T-cell (primary cell): ENCODE measurements at regions of chr1 and their contacts with region 1.

Region 1: GRCh38 chr1:88973520-88974137 is 18.8 kb downstream of the KYAT3 start:
- DNase-seq: peak in 1 of 35 experiments; percentile 63
- ATAC-seq: peak in 1 of 4 experiments; percentile 48
- H3K4me3 ChIP-seq: no peak overlapping the region
- H3K4me3 Mint-ChIP-seq: no peak overlapping the region
- H3K27ac ChIP-seq: no peak overlapping the region
- H3K27ac Mint-ChIP-seq: no peak overlapping the region
- H3K4me1 ChIP-seq: peaks cover 0 to 6% of the 10 kb centered on the region in 2 experiments
- H3K4me1 Mint-ChIP-seq: peaks cover 21 to 34% (median 24%) of the 10 kb centered on the region in 3 donors
- H3K27me3 ChIP-seq: no peaks in the 10 kb centered on the region
- H3K27me3 Mint-ChIP-seq: no peaks in the 10 kb centered on the region

Region 2: GRCh38 chr1:89454845-89455521 is 481.4 kb after region 1 on chr1:
- CTCF ChIA-PET with region 1: interaction called, 7 to 20 read pairs
- POLR2A ChIA-PET with region 1: no interaction called
- DNase-seq: peak; percentile 8 to 79 (median 49)
- ATAC-seq: peak; percentile 75 to 91 (median 79)
- H3K4me3 ChIP-seq: no peak overlapping the region
- H3K4me3 Mint-ChIP-seq: no peak overlapping the region
- H3K27ac ChIP-seq: no peak overlapping the region
- H3K27ac Mint-ChIP-seq: no peak overlapping the region
- H3K4me1 ChIP-seq: peaks cover 0 to 2% of the 10 kb centered on the region in 2 experiments
- H3K4me1 Mint-ChIP-seq: peaks cover 9 to 12% (median 11%) of the 10 kb centered on the region in 3 donors
- H3K27me3 ChIP-seq: no peaks in the 10 kb centered on the region
- H3K27me3 Mint-ChIP-seq: peaks cover 7 to 21% of the 10 kb centered on the region in 2 donors